Mammary epithelial cell (primary cell): ENCODE measurements at regions of chrX and their contacts with region 1.

Region 1: GRCh38 chrX:20266810-20267606 is at the start of gene RPS6KA3:
- DNase-seq: peak; percentile 87
- H3K4me3 ChIP-seq: peak within 1 kb of the TSS; percentile 51 to 74 (median 58)
- H3K27ac ChIP-seq: peak within 1 kb of the TSS; percentile 91
- H3K4me1 ChIP-seq: peaks cover 7% of the 10 kb centered on the region
- H3K27me3 ChIP-seq: no peaks in the 10 kb centered on the region
- CTCF ChIP-seq: no peak
- total RNA-seq, gene RPS6KA3: 34.4 to 37.0 TPM

Region 2: GRCh38 chrX:20378291-20378920 is 111.4 kb after region 1 on chrX:
- CTCF ChIA-PET with region 1: no interaction called
- dilution Hi-C with region 1: no loop called
- in situ Hi-C with region 1: no loop called
- intact Hi-C with region 1: loop called (anchors 5 kb)
- DNase-seq: peak; percentile 64
- H3K4me3 ChIP-seq: no peak overlapping the region
- H3K27ac ChIP-seq: no peak overlapping the region
- H3K4me1 ChIP-seq: peaks cover 5% of the 10 kb centered on the region
- H3K27me3 ChIP-seq: no peaks in the 10 kb centered on the region
- CTCF ChIP-seq: no peak